ENCODE measurements at regions of chr4 and their contacts with region 1.

Region 1: DNA sequence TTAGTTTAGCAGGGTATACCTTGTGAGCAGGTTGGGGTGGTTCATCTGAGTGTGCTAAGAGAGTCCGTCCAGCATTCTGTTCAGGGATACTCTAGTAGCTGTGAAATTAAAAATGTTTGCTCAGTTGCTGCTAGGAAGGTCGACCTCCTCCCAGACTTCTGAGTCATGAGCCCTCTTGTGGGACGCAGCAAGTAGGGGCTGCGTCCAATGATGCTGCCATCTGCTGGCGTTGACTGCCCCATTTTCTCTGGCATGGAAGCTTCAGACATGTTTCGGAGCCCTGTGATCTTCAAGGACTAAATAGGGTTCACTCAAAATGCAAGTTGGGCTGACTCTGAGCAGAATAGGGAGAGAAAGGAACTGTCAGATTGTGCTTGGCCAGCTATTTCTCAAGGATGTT is 201.0 kb upstream of the ARSJ start:
- DNase-seq: no peak
- H3K4me3 ChIP-seq: no peak overlapping the region
- H3K27ac ChIP-seq: no peak overlapping the region
- H3K4me1 ChIP-seq: no peaks in the 10 kb centered on the region
- H3K27me3 ChIP-seq: no peaks in the 10 kb centered on the region
- CTCF ChIP-seq: peak; percentile 32; the same call in 1 of the 2 replicates

Region 2: GRCh38 chr4:113952452-113953029 is 227.9 kb before region 1 on chr4:
- CTCF ChIA-PET with region 1: no interaction called
- POLR2A ChIA-PET with region 1: no interaction called
- intact Hi-C with region 1: loop called (anchors 10 kb)
- DNase-seq: no peak
- H3K4me3 ChIP-seq: no peak overlapping the region
- H3K27ac ChIP-seq: no peak overlapping the region
- H3K4me1 ChIP-seq: no peaks in the 10 kb centered on the region
- H3K27me3 ChIP-seq: no peaks in the 10 kb centered on the region
- CTCF ChIP-seq: peak; percentile 57

Region 3: GRCh38 chr4:114349543-114350175 is 169.2 kb after region 1 on chr4:
- CTCF ChIA-PET with region 1: no interaction called
- POLR2A ChIA-PET with region 1: no interaction called
- intact Hi-C with region 1: no loop called
- DNase-seq: no peak
- H3K4me3 ChIP-seq: no peak overlapping the region
- H3K27ac ChIP-seq: no peak overlapping the region
- H3K4me1 ChIP-seq: no peaks in the 10 kb centered on the region
- H3K27me3 ChIP-seq: no peaks in the 10 kb centered on the region
- CTCF ChIP-seq: no peak

Measured in PC-9 (cell line).